ENCODE measurements at regions of chr22 and their contacts with region 1.

Region 1: DNA sequence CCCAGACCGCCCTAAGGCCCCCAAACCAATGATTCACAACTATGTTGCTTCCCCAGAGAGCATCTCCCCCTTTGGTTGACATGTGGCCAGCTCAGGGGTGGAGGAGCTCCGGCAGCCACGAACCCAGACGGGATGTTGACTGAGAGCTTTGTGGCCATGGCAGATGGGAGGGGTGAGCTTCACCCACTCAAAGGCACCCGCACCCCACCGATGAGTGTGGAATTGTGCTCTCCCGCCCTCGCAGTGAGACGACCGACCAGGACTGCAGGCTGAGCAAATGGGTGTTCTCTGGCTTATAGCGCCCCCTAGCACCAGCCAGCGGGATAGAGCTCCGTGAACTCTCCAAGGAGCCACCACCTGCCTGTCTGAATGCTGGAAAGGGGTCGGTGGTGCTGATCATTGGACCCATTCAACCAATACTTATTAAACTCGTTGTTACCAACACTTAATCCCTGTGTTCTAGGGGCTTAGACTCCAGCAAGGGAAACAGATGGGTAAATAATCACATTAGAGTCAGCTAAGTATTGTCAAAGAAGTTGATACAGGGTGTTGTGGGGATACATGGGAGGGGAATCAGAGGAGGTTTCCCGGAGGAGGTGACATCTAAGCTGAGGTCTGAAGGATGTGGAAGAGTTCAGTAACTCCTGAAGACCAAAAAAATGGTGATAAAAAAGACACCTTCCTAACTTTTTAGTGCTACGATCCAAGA is 4.5 kb upstream of the TIMP3 start:
- DNase-seq: no peak
- H3K4me3 ChIP-seq: no peak overlapping the region
- H3K27ac ChIP-seq: peak overlapping the region; percentile 58
- H3K4me1 ChIP-seq: peaks cover 18% of the 10 kb centered on the region
- H3K27me3 ChIP-seq: no peaks in the 10 kb centered on the region
- CTCF ChIP-seq: peak; percentile 70 to 90 (median 78)
- POLR2A ChIP-seq: peak in 1 of 2 donors; percentile 20

Region 2: DNA sequence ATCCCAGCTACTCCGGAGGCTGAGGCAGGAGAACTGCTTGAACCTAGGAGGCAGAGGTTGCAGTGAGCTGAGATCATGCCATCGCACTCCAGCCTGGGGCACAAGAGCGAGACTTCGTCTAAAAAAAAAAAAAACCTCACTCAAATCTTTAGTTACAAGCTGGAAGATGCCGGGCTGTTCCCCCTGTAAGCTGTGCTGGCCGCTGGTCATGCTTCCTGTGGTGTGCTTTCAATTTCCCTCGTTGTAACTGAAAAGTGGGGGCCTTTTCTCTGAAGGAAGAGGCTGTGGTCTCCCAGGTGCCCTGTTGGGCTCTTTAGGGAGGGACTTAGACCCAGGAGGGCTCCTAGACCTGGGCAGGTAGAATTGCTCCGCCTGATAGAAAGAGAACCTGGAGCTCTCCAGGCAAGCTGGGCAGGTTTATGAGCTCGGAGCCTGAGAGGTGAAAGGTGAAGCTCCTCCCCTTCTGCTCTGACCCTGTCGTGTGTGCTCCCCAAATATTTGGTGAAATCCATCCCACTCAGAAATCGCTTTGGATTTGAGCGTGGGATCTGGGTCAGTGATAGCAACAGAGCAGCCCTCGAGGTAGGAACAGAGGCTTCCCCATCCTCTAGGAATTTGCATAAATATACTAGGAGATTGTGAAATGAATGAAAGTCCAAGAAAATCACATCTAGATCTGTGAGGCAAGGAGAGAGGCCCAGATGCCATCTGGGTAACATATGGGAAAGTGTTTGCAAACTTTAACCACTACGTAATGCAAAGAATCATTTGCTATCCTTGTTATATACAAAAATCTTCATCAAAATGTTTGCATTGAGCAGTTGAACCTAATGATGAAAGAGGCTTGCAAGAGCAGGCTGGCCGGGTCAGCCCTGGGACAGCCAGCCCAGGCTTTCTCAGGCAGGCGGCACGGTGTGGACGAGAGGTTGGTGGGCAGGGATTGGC is 168.1 kb before region 1 on chr22:
- intact Hi-C with region 1: loop called (anchors 5 kb)
- DNase-seq: no peak
- H3K4me3 ChIP-seq: no peak overlapping the region
- H3K27ac ChIP-seq: peak overlapping the region; percentile 77
- H3K4me1 ChIP-seq: peaks cover 52% of the 10 kb centered on the region
- H3K27me3 ChIP-seq: no peaks in the 10 kb centered on the region
- CTCF ChIP-seq: no peak
- POLR2A ChIP-seq: no peak

Region 3: DNA sequence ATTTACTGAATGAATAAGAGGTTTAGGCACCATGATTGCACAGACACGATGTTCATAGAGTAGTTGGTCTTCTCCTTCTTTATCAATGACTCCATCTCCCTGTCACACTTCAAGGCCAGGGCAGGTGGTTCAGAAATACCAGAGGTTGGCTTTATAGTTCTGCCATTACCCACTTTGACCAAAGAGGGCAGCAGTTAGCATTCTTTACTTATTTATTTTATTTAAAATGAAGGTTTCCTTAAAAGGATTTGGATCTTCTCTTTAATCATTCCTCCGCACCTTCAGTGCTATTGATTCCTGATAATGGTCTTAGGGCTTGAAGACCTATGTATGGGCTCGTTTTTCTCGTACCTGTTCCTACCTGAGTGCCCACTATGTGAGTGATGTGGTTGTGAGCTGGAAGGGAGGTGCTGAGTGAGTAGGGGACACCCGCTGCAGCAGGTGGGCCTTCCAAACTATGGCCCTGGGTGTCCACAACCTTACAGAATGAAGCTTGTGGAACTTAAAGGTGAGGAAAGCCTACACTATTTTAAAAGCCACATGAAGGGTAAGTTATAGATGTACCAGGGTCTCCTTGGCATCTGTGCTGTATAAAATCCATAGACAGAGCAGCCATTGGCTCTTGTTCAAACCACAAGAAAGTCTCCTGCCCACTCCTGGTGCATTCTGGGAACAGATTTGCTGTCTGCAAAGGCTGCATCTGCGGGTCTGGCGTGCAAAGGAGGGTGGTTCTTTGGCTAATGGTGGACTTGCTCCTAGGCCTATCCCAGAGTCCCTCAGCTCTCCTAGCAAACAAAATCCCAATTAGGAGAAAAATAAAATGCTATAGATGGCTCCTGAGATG is 39.5 kb after region 1 on chr22:
- intact Hi-C with region 1: loop called (anchors 5 kb)
- DNase-seq: no peak
- H3K4me3 ChIP-seq: no peak overlapping the region
- H3K27ac ChIP-seq: peak overlapping the region; percentile 25
- H3K4me1 ChIP-seq: peaks cover 96% of the 10 kb centered on the region
- H3K27me3 ChIP-seq: no peaks in the 10 kb centered on the region
- CTCF ChIP-seq: peak in 1 of 3 experiments; percentile 18
- POLR2A ChIP-seq: no peak

Region 4: GRCh38 chr22:32926600-32926999 is 129.6 kb after region 1 on chr22:
- intact Hi-C with region 1: loop called (anchors 10 kb)
- DNase-seq: no peak
- H3K4me3 ChIP-seq: no peak overlapping the region
- H3K27ac ChIP-seq: no peak overlapping the region
- H3K4me1 ChIP-seq: no peaks in the 10 kb centered on the region
- H3K27me3 ChIP-seq: no peaks in the 10 kb centered on the region
- CTCF ChIP-seq: peak in 1 of 3 experiments; percentile 32
- POLR2A ChIP-seq: no peak